Activated CD8-positive, alpha-beta T cell treated with anti-CD3 and anti-CD28 coated beads for 36 hours (primary cell): ENCODE measurements at regions of chr20 and their contacts with region 1.

Region 1: GRCh38 chr20:38748097-38748860 is at the start of gene ACTR5:
- DNase-seq: peak; percentile 95
- ATAC-seq: peak; percentile 95
- H3K4me3 Mint-ChIP-seq: peak within 1 kb of the TSS; percentile 96
- H3K27ac Mint-ChIP-seq: peak within 1 kb of the TSS; percentile 97
- H3K4me1 Mint-ChIP-seq: peaks cover 22% of the 10 kb centered on the region
- H3K27me3 Mint-ChIP-seq: peaks cover 4% of the 10 kb centered on the region
- CTCF ChIP-seq: no peak
- total RNA-seq, gene ACTR5: 7.1 to 7.4 TPM

Region 2: GRCh38 chr20:38633577-38634093 is 114.6 kb before region 1 on chr20:
- CTCF ChIA-PET with region 1: interaction called, 17 read pairs
- POLR2A ChIA-PET with region 1: no interaction called
- intact Hi-C with region 1: no loop called
- DNase-seq: peak; percentile 75
- ATAC-seq: peak; percentile 99
- H3K4me3 Mint-ChIP-seq: no peak overlapping the region
- H3K27ac Mint-ChIP-seq: no peak overlapping the region
- H3K4me1 Mint-ChIP-seq: peaks cover 8% of the 10 kb centered on the region
- H3K27me3 Mint-ChIP-seq: peaks cover 7% of the 10 kb centered on the region
- CTCF ChIP-seq: peak; percentile 95

Region 3: GRCh38 chr20:38658879-38659596 is 89.2 kb before region 1 on chr20:
- CTCF ChIA-PET with region 1: interaction called, 13 read pairs
- POLR2A ChIA-PET with region 1: no interaction called
- intact Hi-C with region 1: no loop called
- DNase-seq: peak; percentile 45
- ATAC-seq: peak; percentile 92
- H3K4me3 Mint-ChIP-seq: no peak overlapping the region
- H3K27ac Mint-ChIP-seq: no peak overlapping the region
- H3K4me1 Mint-ChIP-seq: no peaks in the 10 kb centered on the region
- H3K27me3 Mint-ChIP-seq: peaks cover 21% of the 10 kb centered on the region
- CTCF ChIP-seq: peak; percentile 69

Region 4: GRCh38 chr20:38737887-38738286 is 10.4 kb before region 1 on chr20:
- CTCF ChIA-PET with region 1: interaction called, 31 read pairs
- POLR2A ChIA-PET with region 1: no interaction called
- intact Hi-C with region 1: no loop called
- DNase-seq: no peak
- ATAC-seq: no peak
- H3K4me3 Mint-ChIP-seq: no peak overlapping the region
- H3K27ac Mint-ChIP-seq: no peak overlapping the region
- H3K4me1 Mint-ChIP-seq: no peaks in the 10 kb centered on the region
- H3K27me3 Mint-ChIP-seq: peaks cover 59% of the 10 kb centered on the region
- CTCF ChIP-seq: no peak

Region 5: GRCh38 chr20:38764567-38765355 is 16.5 kb after region 1 on chr20:
- CTCF ChIA-PET with region 1: interaction called, 38 read pairs
- POLR2A ChIA-PET with region 1: interaction called, 4 read pairs
- intact Hi-C with region 1: no loop called
- DNase-seq: peak; percentile 80
- ATAC-seq: peak; percentile 100
- H3K4me3 Mint-ChIP-seq: no peak overlapping the region
- H3K27ac Mint-ChIP-seq: peak overlapping the region; percentile 14
- H3K4me1 Mint-ChIP-seq: peaks cover 20% of the 10 kb centered on the region
- H3K27me3 Mint-ChIP-seq: no peaks in the 10 kb centered on the region
- CTCF ChIP-seq: no peak

Region 6: DNA sequence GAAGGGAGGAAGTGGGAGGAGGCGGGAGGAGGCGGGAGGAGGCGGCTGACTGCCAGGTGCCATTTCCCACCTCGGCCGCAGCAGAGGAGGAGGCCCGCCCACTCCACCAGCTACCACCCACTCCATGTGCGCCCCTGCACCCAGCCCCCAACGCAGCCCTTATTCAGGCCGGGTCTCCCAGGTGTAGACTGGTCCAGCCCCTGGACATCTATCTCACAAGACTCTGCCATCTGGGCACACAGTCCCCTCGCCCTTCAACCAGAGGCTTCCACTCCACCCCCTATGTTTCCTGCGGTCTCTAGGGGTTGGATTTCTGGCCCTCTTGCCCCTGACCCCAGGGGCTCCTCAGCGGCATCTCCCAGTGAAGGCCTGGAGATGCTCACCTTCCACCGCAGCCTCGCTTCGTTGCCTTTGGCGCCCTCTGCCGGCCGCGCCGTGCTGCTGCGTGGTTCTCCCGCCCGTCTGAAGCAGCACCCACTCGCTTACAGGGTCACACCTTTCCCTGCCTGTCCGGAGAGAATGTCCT is 145.3 kb after region 1 on chr20:
- CTCF ChIA-PET with region 1: interaction called, 24 read pairs
- POLR2A ChIA-PET with region 1: interaction called, 3 read pairs
- intact Hi-C with region 1: no loop called
- DNase-seq: peak; percentile 84
- ATAC-seq: peak; percentile 79
- H3K4me3 Mint-ChIP-seq: peak overlapping the region; percentile 29
- H3K27ac Mint-ChIP-seq: peak overlapping the region; percentile 85
- H3K4me1 Mint-ChIP-seq: peaks cover 52% of the 10 kb centered on the region
- H3K27me3 Mint-ChIP-seq: no peaks in the 10 kb centered on the region
- CTCF ChIP-seq: peak; percentile 94